ENCODE measurements at regions of chr17 and their contacts with region 1.

Region 1: DNA sequence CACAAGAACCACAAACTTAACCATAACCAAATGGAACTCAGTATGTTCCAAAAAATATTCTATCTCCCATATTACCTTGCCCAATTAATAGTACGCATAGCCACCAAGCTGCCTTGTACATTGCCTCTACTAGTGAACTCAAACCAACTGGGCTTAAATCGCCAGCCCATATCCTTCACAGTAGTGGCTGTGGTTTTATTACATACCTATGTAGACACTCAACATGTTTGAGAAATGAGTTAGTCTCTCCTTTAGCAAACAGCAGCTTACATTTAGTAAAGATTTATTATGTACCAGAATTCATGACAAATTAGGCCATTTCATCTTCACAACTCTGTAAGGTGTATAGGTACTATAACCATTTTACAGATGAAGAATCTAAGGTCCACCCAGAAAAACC is 41.4 kb downstream of the GRB2 start:
- DNase-seq: no peak
- ATAC-seq: no peak
- H3K4me3 ChIP-seq: no peak overlapping the region
- H3K4me3 Mint-ChIP-seq: peak overlapping the region; percentile 64
- H3K27ac ChIP-seq: peak overlapping the region; percentile 8 to 70
- H3K27ac Mint-ChIP-seq: peak overlapping the region; percentile 62
- H3K4me1 ChIP-seq: peaks cover 84 to 93% of the 10 kb centered on the region in 2 donors
- H3K4me1 Mint-ChIP-seq: peaks cover 92% of the 10 kb centered on the region
- H3K27me3 ChIP-seq: no peaks in the 10 kb centered on the region
- H3K27me3 Mint-ChIP-seq: no peaks in the 10 kb centered on the region
- CTCF ChIP-seq: no peak

Region 2: GRCh38 chr17:75313941-75314551 is 50.0 kb before region 1 on chr17:
- CTCF ChIA-PET with region 1: interaction called, 5 read pairs
- POLR2A ChIA-PET with region 1: interaction called, 10 read pairs
- intact Hi-C with region 1: no loop called
- DNase-seq: no peak
- ATAC-seq: no peak
- H3K4me3 ChIP-seq: no peak overlapping the region
- H3K4me3 Mint-ChIP-seq: peak overlapping the region; percentile 27
- H3K27ac ChIP-seq: peak overlapping the region; percentile 18 to 60
- H3K27ac Mint-ChIP-seq: peak overlapping the region; percentile 91
- H3K4me1 ChIP-seq: peaks cover 26 to 68% of the 10 kb centered on the region in 2 donors
- H3K4me1 Mint-ChIP-seq: peaks cover 52% of the 10 kb centered on the region
- H3K27me3 ChIP-seq: no peaks in the 10 kb centered on the region
- H3K27me3 Mint-ChIP-seq: no peaks in the 10 kb centered on the region
- CTCF ChIP-seq: no peak

Region 3: DNA sequence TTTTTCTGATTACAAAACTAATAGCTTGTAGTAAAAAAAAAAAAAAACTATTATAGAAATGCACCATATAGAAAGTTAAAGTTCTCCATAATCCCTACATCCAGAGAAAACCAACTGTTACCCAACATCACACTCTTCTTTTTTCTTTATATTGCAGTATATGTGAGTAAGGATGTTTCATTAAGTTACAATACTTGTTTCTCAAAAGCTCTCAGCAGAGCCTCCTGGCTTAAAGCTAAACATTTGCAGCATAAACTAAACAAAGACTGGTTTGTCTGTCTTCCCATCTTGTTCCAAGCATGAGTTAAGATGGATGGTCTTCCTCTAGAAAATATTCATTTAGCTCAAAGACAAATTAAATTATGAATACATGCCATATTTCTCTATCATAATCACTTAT is 16.2 kb after region 1 on chr17:
- CTCF ChIA-PET with region 1: interaction called, 4 read pairs
- POLR2A ChIA-PET with region 1: interaction called, 6 read pairs
- intact Hi-C with region 1: loop called (anchors 2 kb)
- DNase-seq: no peak
- ATAC-seq: no peak
- H3K4me3 ChIP-seq: no peak overlapping the region
- H3K4me3 Mint-ChIP-seq: no peak overlapping the region
- H3K27ac ChIP-seq: peak overlapping the region in 1 of 2 donors; percentile 68
- H3K27ac Mint-ChIP-seq: no peak overlapping the region
- H3K4me1 ChIP-seq: peaks cover 54 to 56% of the 10 kb centered on the region in 2 donors
- H3K4me1 Mint-ChIP-seq: peaks cover 65% of the 10 kb centered on the region
- H3K27me3 ChIP-seq: no peaks in the 10 kb centered on the region
- H3K27me3 Mint-ChIP-seq: no peaks in the 10 kb centered on the region
- CTCF ChIP-seq: no peak

Region 4: DNA sequence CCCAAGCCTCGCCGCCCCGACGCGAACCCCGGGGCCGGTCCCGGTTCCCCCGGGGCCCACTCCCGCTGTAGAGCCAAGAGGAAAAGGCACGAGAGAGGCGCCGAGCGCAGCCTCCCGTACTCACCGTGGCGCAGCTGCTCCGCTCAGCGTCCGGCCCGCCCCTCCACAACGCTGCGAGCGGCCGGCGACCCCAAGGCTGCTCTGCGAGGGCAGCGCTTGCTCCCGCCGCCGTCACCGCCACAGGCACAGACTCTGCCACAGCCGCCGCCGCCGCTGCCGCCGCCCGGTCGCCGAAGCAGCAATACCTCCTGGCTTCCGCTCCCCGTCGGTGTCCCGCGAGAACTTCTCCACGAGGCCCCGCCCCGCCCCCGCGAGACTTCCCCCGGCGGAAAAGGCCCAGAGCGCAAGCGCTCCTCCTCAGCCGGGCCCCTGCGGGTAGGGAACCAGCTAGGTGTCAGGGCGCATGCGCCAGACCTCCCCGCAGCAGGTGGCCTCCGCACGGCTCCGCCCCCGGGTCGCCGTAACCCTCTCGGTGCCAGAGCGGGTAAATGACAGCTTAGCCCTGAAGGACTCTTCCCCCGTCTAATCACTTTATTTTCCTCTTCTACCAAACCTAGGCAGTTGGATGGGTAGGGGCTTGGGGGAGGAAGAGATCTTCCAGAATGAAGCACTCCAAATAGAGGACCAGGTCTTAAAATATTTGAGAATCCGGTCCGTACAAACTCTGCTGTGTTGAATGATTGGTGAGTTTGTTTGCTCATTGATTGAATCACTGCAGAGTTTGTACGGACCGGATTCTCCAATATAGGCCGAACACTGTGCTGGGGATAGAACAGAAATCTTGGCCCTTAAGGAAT is 41.5 kb after region 1 on chr17 and contains the start of gene GRB2:
- CTCF ChIA-PET with region 1: interaction called, 6 read pairs
- POLR2A ChIA-PET with region 1: no interaction called
- intact Hi-C with region 1: loop called (anchors 5 kb)
- DNase-seq: peak; percentile 98
- ATAC-seq: peak; percentile 89
- H3K4me3 ChIP-seq: peak within 1 kb of the TSS; percentile 91 to 99 (median 99)
- H3K4me3 Mint-ChIP-seq: peak within 1 kb of the TSS; percentile 98
- H3K27ac ChIP-seq: peak within 1 kb of the TSS; percentile 79 to 92
- H3K27ac Mint-ChIP-seq: peak within 1 kb of the TSS; percentile 97
- H3K4me1 ChIP-seq: peaks cover 32 to 43% of the 10 kb centered on the region in 2 donors
- H3K4me1 Mint-ChIP-seq: peaks cover 39% of the 10 kb centered on the region
- H3K27me3 ChIP-seq: no peaks in the 10 kb centered on the region
- H3K27me3 Mint-ChIP-seq: no peaks in the 10 kb centered on the region
- CTCF ChIP-seq: no peak
- total RNA-seq, gene GRB2: 219 and 224 TPM in 2 replicates

Measured in B cell (primary cell).